Heart left ventricle (tissue), 16 donors: ENCODE measurements at regions of chr12 and their contacts with region 1.

Region 1: GRCh38 chr12:53675651-53676453 is at the start of gene ATP5MC2:
- DNase-seq: peak; percentile 97 to 98 (median 98)
- ATAC-seq: peak; percentile 96 to 99 (median 98)
- H3K4me3 ChIP-seq: peak within 1 kb of the TSS; percentile 51 to 90 (median 80)
- H3K27ac ChIP-seq: peak within 1 kb of the TSS; percentile 89 to 98 (median 94)
- H3K4me1 ChIP-seq: peaks cover 0 to 57% (median 32%) of the 10 kb centered on the region in 12 donors
- H3K27me3 ChIP-seq: no peaks in the 10 kb centered on the region
- CTCF ChIP-seq: peak; percentile 93 to 100 (median 99)
- POLR2A ChIP-seq: peak in 1 of 2 donors; percentile 68
- total RNA-seq, gene ATP5MC2: 392 to 753 (median 520) TPM

Region 2: DNA sequence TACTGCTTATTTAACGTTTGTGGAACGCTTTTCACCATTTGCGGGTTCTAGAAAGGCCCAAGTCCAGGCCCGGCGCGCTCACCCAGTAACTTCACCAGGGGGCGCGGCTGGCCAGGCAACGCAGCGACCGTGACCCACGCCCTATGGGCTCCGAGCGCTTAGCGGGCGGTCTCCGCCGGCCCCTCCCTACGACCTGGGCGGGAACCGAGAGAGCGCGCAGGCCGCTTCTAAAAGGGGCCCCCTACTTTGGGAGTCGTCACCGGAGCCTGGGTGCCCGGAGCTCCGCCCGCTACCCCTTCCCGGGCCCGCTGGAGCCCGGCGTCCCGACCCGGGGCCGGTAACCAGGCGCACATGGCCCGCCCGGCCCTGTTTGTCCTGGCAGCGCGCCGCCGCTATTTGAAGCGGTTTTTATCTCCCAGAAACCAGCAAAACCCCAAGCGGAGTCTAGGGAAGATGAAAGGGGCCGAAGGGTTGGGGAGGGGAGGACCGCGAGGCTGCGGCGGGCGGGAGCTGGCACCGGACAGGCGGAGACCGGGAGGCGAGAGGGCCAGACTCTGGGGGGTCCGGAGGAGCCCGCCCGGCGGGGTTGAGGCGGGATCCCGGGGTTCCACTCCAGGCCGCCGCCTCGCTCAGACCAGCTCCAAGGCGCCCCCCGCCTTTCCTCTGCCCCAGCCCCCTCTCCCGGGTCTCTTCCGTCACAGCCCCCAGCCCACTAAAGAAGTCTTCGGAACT is 350.9 kb before region 1 on chr12:
- intact Hi-C with region 1: no loop called
- DNase-seq: peak; percentile 94 to 97 (median 95)
- ATAC-seq: peak; percentile 74 to 87 (median 84)
- H3K4me3 ChIP-seq: peak overlapping the region; percentile 60 to 87 (median 70)
- H3K27ac ChIP-seq: peak overlapping the region; percentile 72 to 97 (median 92)
- H3K4me1 ChIP-seq: peaks cover 0 to 42% (median 31%) of the 10 kb centered on the region in 12 donors
- H3K27me3 ChIP-seq: no peaks in the 10 kb centered on the region
- CTCF ChIP-seq: peak; percentile 71 to 98 (median 86)
- POLR2A ChIP-seq: peak in 1 of 2 donors; percentile 97

Region 3: GRCh38 chr12:53543539-53543938 is 132.3 kb before region 1 on chr12:
- intact Hi-C with region 1: loop called (anchors 1 to 5 kb)
- DNase-seq: peak in 4 of 5 donors; percentile 39 to 71 (median 50)
- ATAC-seq: peak; percentile 79 to 94 (median 92)
- H3K4me3 ChIP-seq: no peak overlapping the region
- H3K27ac ChIP-seq: peak overlapping the region in 10 of 12 donors; percentile 4 to 64 (median 34)
- H3K4me1 ChIP-seq: peaks cover 0 to 18% (median 9%) of the 10 kb centered on the region in 12 donors
- H3K27me3 ChIP-seq: no peaks in the 10 kb centered on the region
- CTCF ChIP-seq: peak; percentile 70 to 97 (median 84)
- POLR2A ChIP-seq: no peak

Region 4: DNA sequence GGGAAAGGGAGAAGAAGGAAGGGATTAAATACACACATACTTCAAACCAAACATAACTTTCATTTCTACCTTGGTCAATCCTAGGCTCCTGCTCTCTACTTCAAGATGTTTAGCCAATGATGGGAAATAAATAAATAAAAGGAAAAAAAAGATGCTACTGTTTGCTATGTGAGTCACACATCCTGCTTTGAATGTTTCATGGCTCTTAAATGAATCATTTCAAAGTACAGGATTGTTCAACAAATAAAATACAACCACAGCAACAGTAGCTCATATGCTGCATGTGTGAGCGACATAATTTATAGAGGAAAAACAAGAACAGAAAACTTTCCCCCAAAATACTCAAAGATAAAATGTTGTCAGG is 114.3 kb before region 1 on chr12:
- intact Hi-C with region 1: loop called in 1 of 10 experiments (anchors 5 kb)
- DNase-seq: no peak
- ATAC-seq: peak in 3 of 4 donors; percentile 48 to 75 (median 51)
- H3K4me3 ChIP-seq: no peak overlapping the region
- H3K27ac ChIP-seq: peak overlapping the region in 6 of 12 donors; percentile 33 to 52 (median 42)
- H3K4me1 ChIP-seq: peaks cover 0 to 68% (median 23%) of the 10 kb centered on the region in 12 donors
- H3K27me3 ChIP-seq: no peaks in the 10 kb centered on the region
- CTCF ChIP-seq: no peak
- POLR2A ChIP-seq: no peak

Region 5: DNA sequence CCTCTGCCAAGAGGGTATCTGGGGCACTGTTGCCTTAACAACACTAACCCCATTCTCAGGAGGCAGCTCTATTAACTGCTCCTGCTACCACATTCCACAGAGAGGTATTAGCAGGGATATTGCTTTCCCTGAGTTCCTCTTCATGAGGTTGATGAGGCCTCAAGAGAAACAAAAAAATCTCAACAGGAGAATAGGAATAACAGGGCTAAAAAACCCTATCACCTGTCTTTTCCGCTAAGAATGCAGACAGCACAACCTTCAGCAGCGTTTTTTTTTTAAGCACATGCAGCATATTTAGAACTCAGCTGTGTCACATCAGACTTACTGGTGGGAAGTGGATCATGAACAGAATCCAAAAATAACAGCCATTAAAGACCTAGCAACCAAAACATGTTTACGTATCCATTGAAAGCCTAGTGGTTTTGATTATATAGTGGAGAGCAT is 78.9 kb before region 1 on chr12:
- intact Hi-C with region 1: loop called in 3 of 10 experiments (anchors 5 kb)
- DNase-seq: no peak
- ATAC-seq: peak; percentile 84 to 94 (median 88)
- H3K4me3 ChIP-seq: peak overlapping the region in 4 of 12 donors; percentile 0 to 16 (median 10)
- H3K27ac ChIP-seq: peak overlapping the region; percentile 28 to 84 (median 72)
- H3K4me1 ChIP-seq: peaks cover 0 to 81% (median 60%) of the 10 kb centered on the region in 12 donors
- H3K27me3 ChIP-seq: no peaks in the 10 kb centered on the region
- CTCF ChIP-seq: no peak
- POLR2A ChIP-seq: no peak

Region 6: GRCh38 chr12:53625946-53626701 is 49.7 kb before region 1 on chr12 and contains the start of gene ATF7:
- intact Hi-C with region 1: loop called (anchors 1 to 10 kb)
- DNase-seq: peak; percentile 98 to 99 (median 98)
- ATAC-seq: peak; percentile 98 to 99 (median 98)
- H3K4me3 ChIP-seq: peak within 1 kb of the TSS; percentile 49 to 94 (median 71)
- H3K27ac ChIP-seq: peak within 1 kb of the TSS; percentile 88 to 98 (median 96)
- H3K4me1 ChIP-seq: peaks cover 0 to 48% (median 29%) of the 10 kb centered on the region in 12 donors
- H3K27me3 ChIP-seq: no peaks in the 10 kb centered on the region
- CTCF ChIP-seq: peak in 1 of 12 donors; percentile 9
- POLR2A ChIP-seq: peak in 1 of 2 donors; percentile 76
- total RNA-seq, gene ATF7: 21.1 to 43.2 (median 32.0) TPM